Caco-2 (cell line): ENCODE measurements at regions of chr18 and their contacts with region 1.

Region 1: GRCh38 chr18:58231930-58232329 is 187.9 kb downstream of the NEDD4L start:
- DNase-seq: peak in 1 of 2 experiments; percentile 22
- H3K4me3 ChIP-seq: no peak overlapping the region
- H3K4me3 Mint-ChIP-seq: no peak overlapping the region
- H3K27ac Mint-ChIP-seq: peak overlapping the region; percentile 78
- H3K4me1 ChIP-seq: peaks cover 45% of the 10 kb centered on the region
- H3K4me1 Mint-ChIP-seq: peaks cover 6% of the 10 kb centered on the region
- H3K27me3 ChIP-seq: no peaks in the 10 kb centered on the region
- H3K27me3 Mint-ChIP-seq: no peaks in the 10 kb centered on the region
- CTCF ChIP-seq: peak in 1 of 2 experiments; percentile 45

Region 2: DNA sequence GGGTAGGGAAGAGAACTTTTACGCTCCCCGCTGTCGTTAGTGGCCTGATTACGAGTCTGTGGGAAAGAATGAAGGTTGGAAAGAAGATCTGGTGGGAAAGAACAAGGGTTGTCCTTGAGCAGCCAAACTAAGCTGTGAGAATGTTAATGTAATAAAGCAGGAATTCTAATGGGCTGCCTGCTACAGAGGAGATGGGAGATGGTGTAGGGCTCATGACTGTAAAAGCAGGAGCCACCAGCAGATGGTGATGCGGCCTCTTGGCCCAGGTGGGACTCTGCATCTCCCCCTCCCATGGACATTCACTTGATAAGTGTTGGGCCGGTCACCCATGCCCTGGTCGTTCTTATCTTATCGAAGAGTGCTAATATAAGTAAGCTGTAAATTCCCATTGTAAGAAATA is 37.9 kb before region 1 on chr18:
- CTCF ChIA-PET with region 1: interaction called, 3 read pairs
- POLR2A ChIA-PET with region 1: no interaction called
- intact Hi-C with region 1: loop called (anchors 1 kb)
- DNase-seq: peak; percentile 57 to 71
- H3K4me3 ChIP-seq: no peak overlapping the region
- H3K4me3 Mint-ChIP-seq: no peak overlapping the region
- H3K27ac Mint-ChIP-seq: peak overlapping the region; percentile 4
- H3K4me1 ChIP-seq: peaks cover 7% of the 10 kb centered on the region; the same call in 1 of the 2 replicates
- H3K4me1 Mint-ChIP-seq: peaks cover 14% of the 10 kb centered on the region
- H3K27me3 ChIP-seq: no peaks in the 10 kb centered on the region
- H3K27me3 Mint-ChIP-seq: no peaks in the 10 kb centered on the region
- CTCF ChIP-seq: peak; percentile 18 to 70

Region 3: DNA sequence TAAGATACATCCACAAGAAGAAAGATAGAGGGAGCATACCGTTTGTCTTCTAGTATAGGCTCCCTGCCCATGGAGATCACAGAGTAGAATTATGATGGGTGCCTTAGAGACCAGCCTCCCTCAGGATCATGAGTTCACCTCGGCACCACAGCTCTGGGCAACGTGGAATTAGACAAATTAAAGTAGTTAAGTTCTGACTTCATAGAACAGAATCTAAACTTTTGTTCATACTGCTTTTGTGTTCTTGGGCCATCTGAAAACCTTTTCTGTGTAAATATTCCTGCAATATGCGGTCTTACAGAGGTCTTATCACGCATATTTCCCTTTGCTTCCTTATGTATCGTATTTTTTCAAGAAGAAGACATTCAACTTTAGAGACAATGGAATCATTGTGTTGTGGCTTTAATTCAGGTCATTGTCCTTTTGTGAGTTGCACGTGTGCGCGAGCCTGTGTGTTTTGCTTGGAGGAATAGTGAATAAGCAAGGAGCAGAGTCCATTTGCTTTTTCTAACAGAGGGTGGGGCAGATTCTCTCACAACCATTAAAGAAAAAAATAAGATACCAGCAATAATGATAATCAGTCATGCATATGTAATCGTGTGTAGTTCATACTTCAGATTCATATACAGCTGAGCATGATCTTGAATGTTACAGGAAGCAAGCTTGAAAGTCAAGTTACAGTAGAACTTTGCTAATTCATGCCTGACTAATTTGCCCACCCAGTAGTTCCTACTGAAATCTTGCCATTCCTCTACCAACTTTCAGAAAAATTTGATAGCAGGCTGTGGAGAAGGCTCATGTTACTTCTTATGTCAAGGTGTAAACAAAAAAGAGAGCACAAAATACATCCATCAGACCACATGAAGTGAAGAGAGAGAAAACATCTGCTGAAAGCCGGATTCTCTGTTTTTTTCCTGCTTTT is 55.7 kb after region 1 on chr18:
- CTCF ChIA-PET with region 1: no interaction called
- POLR2A ChIA-PET with region 1: no interaction called
- intact Hi-C with region 1: loop called (anchors 1 kb)
- DNase-seq: no peak
- H3K4me3 ChIP-seq: no peak overlapping the region
- H3K4me3 Mint-ChIP-seq: peak overlapping the region; percentile 62
- H3K27ac Mint-ChIP-seq: peak overlapping the region; percentile 67
- H3K4me1 ChIP-seq: peaks cover 35% of the 10 kb centered on the region
- H3K4me1 Mint-ChIP-seq: peaks cover 20% of the 10 kb centered on the region
- H3K27me3 ChIP-seq: no peaks in the 10 kb centered on the region
- H3K27me3 Mint-ChIP-seq: no peaks in the 10 kb centered on the region
- CTCF ChIP-seq: no peak

Region 4: GRCh38 chr18:58321986-58322385 is 90.1 kb after region 1 on chr18:
- CTCF ChIA-PET with region 1: no interaction called
- POLR2A ChIA-PET with region 1: no interaction called
- intact Hi-C with region 1: loop called (anchors 1 kb)
- DNase-seq: peak; percentile 49 to 54
- H3K4me3 ChIP-seq: no peak overlapping the region
- H3K4me3 Mint-ChIP-seq: no peak overlapping the region
- H3K27ac Mint-ChIP-seq: no peak overlapping the region
- H3K4me1 ChIP-seq: 0 out of 2 replicates have a peak, but pooled peaks cover 4% of the 10 kb centered on the region
- H3K4me1 Mint-ChIP-seq: no peaks in the 10 kb centered on the region
- H3K27me3 ChIP-seq: no peaks in the 10 kb centered on the region
- H3K27me3 Mint-ChIP-seq: no peaks in the 10 kb centered on the region
- CTCF ChIP-seq: peak in 1 of 2 experiments; percentile 47